Dendritic cell treated with granulocyte-macrophage colony-stimulating factor and Interleukin-4, amounts not matched to agents 40 ng/mL and 50 ng/mL, for 4 days (primary cell): ENCODE measurements at regions of chr1 and their contacts with region 1.

Region 1: DNA sequence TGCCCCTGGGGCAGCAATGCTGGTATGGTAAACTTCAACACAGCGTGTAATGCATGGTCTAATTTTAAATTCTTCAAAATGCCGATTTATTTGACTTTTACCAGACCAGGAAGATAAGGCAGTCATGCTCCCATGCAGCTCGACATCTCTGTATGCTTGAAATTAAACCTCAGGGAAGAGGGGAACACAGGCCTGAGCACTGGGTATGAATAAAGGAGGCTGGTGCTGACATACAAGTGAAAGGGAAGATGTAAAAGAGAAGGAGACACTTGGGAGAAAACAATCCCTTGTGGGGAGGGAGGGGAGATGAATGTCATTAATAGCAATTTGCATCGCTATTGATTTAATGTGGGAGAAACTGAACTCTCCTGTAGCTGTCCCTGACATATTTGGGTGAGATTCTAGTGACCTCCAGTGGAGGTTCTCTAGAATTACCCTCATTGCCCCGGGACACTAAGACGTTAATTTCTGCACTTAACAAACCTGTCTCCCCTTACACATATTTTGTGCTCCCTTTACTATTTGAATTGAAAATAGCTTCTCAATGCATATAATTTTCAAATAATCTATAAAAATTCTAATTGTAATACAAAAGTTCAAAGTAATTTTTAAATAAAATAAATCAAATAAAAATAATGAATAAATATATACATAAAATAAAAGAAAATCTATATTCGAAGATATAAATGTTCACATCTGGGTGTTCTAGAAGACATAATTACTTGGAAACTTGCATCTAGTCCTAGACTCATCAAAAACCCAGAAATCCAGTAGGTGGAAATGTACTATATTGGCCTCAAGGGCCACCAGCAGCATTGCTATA is 283.1 kb downstream of the LMX1A start:
- H3K4me3 Mint-ChIP-seq: no peak overlapping the region
- H3K27ac Mint-ChIP-seq: no peak overlapping the region
- H3K4me1 Mint-ChIP-seq: no peaks in the 10 kb centered on the region
- H3K27me3 Mint-ChIP-seq: no peaks in the 10 kb centered on the region

Region 2: DNA sequence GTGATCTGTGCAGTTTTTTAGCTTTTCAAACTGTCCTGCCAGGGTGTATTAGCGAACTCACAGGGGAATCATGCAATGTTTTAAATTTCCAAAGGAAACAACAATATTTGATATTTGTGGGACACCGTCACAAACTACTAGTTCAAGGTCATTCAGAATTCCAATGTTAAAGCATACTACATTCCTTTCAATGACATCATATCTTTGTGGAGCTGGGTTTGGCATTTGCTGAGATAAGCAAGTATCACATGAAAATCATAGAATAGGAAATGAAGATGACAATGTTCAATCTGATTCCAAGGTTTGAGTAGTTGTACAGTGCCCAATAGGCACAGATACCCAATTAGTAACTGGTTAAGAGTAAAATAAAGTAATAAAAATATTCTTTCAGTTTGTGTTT is 1716.0 kb before region 1 on chr1:
- intact Hi-C with region 1: loop called (anchors 5 kb)
- H3K4me3 Mint-ChIP-seq: no peak overlapping the region
- H3K27ac Mint-ChIP-seq: no peak overlapping the region
- H3K4me1 Mint-ChIP-seq: no peaks in the 10 kb centered on the region
- H3K27me3 Mint-ChIP-seq: peaks cover 2% of the 10 kb centered on the region

Region 3: GRCh38 chr1:165144757-165145397 is 71.5 kb after region 1 on chr1:
- intact Hi-C with region 1: no loop called
- H3K4me3 Mint-ChIP-seq: no peak overlapping the region
- H3K27ac Mint-ChIP-seq: no peak overlapping the region
- H3K4me1 Mint-ChIP-seq: no peaks in the 10 kb centered on the region
- H3K27me3 Mint-ChIP-seq: no peaks in the 10 kb centered on the region